ENCODE measurements at regions of chr13 and their contacts with region 1.

Region 1: DNA sequence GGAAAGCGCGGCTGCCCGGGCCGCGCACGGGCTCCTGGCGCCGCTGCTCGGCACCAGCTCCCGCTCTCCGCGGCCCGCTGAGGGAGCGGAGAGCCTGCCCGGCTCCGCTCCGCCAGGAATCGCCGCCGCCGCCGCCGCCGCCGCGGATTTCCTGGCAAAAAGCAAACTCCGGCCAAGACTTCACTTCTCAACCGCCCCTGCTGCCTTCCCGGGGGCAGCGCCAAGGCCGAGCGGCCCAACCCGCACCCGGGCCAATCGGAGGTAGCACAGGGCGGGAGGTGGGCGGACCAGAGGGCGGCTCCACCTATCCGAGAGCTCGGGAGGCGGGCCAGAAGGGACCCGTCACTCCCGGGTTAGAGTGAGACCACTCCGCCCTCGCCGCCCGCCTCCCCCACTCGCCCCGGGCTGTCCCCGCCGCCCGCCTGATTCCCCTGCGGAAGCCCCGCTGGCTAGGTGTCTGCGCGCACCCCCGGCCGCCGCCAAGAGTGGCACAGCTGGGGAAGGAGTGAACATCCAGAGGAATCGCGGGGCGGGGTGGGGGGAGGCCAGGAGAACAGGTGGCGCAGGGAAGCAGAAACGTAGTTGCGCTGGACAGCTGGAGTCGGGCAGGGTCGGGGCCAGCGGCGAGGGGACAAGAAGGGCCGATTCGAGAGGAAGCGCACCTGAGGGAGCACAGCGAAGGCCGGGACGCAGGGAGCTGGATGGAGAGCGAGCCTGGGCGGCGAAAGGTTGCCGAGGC is at the start of gene LNX2:
- DNase-seq: peak; percentile 94 to 98 (median 95)
- H3K4me3 ChIP-seq: peak within 1 kb of the TSS; percentile 90
- H3K4me3 Mint-ChIP-seq: peak within 1 kb of the TSS; percentile 90 to 96 (median 95)
- H3K27ac ChIP-seq: peak within 1 kb of the TSS; percentile 90
- H3K27ac Mint-ChIP-seq: peak within 1 kb of the TSS; percentile 91 to 98 (median 98)
- H3K4me1 ChIP-seq: peaks cover 34% of the 10 kb centered on the region
- H3K4me1 Mint-ChIP-seq: peaks cover 55 to 67% (median 64%) of the 10 kb centered on the region in 3 donors
- H3K27me3 ChIP-seq: no peaks in the 10 kb centered on the region
- H3K27me3 Mint-ChIP-seq: no peaks in the 10 kb centered on the region
- total RNA-seq, gene LNX2: 4.4 to 4.7 TPM

Region 2: GRCh38 chr13:27449936-27450828 is 170.4 kb before region 1 on chr13 and contains the start of gene MTIF3:
- CTCF ChIA-PET with region 1: interaction called, 18 read pairs
- POLR2A ChIA-PET with region 1: interaction called, 27 read pairs
- DNase-seq: peak; percentile 95 to 99 (median 97)
- H3K4me3 ChIP-seq: peak within 1 kb of the TSS; percentile 87
- H3K4me3 Mint-ChIP-seq: peak within 1 kb of the TSS; percentile 91 to 97 (median 93)
- H3K27ac ChIP-seq: peak within 1 kb of the TSS; percentile 84
- H3K27ac Mint-ChIP-seq: peak within 1 kb of the TSS; percentile 96 to 98 (median 97)
- H3K4me1 ChIP-seq: peaks cover 42% of the 10 kb centered on the region
- H3K4me1 Mint-ChIP-seq: peaks cover 53 to 68% (median 65%) of the 10 kb centered on the region in 3 donors
- H3K27me3 ChIP-seq: no peaks in the 10 kb centered on the region
- H3K27me3 Mint-ChIP-seq: peaks cover 0 to 3% of the 10 kb centered on the region in 2 donors
- total RNA-seq, gene MTIF3: 35.7 to 37.5 TPM